Ovary (tissue), 10 donors: ENCODE measurements at regions of chr13 and their contacts with region 1.

Region 1: DNA sequence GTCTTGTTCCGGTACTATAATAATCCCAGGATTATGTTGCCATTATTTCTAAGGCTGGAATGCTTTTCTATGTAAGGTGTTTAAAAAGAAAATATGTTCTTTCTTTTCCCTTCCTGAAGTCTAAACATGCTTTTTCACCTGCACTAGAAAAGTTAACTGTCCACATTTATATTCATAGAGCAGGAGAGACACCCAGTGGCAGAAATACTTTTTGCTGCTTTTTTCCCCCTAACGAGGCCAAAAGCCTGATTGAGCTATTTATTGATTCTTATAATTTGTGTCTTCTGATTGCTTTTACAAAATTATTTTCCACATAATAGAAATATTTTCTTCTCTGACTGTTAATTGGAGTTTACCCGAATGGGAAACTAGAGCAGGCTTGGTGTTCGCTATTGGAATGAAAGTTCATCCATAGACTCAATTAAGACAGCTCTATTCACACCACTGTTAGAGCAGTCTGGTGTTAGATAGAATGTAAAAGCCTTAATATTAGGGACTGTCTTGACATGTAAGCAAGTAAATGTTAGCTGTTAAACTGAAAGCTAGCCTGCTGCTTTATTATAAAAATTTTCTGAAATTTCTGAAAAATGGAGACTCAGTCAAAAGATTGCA is 15.8 kb downstream of the GPR180 start:
- DNase-seq: no peak
- H3K4me3 ChIP-seq: no peak overlapping the region
- H3K27ac ChIP-seq: no peak overlapping the region
- H3K4me1 ChIP-seq: no peaks in the 10 kb centered on the region
- H3K27me3 ChIP-seq: no peaks in the 10 kb centered on the region
- CTCF ChIP-seq: peak in 2 of 3 donors; percentile 32 to 67
- EP300 ChIP-seq: no peak
- POLR2A ChIP-seq: no peak

Region 2: DNA sequence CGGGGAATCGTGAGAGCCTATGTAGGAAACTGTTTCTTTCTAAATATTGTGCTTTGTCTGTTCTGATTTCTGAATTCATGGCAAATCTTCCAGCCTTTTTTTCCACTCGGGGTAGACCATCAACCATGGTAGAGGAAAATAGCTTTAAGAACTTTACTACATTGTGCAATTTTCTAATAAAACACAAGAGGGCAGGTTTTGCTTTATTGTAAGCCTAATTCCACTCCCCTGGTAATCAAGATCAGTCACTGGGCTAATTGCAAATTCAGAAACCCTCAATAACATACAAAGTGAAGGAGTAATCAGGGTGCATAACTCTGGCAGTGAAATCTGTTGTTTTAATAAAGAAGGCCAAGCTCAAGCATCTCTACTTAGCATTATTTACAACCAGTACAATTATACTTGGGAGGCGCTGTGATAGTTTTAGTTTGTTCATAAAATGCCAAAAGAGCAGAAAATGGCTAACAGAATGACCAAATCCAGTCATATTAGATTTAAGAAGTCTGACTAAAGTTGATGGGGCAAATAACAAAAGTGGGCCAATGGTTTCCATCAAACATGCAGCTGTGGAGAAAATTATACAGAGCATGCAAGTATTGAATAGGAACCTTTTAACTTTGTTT is 181.8 kb before region 1 on chr13:
- intact Hi-C with region 1: loop called (anchors 5 to 10 kb)
- DNase-seq: no peak
- H3K4me3 ChIP-seq: no peak overlapping the region
- H3K27ac ChIP-seq: no peak overlapping the region
- H3K4me1 ChIP-seq: no peaks in the 10 kb centered on the region
- H3K27me3 ChIP-seq: no peaks in the 10 kb centered on the region
- CTCF ChIP-seq: peak; percentile 13 to 49 (median 44)
- EP300 ChIP-seq: no peak
- POLR2A ChIP-seq: no peak